Psoas muscle (tissue), 8 donors: ENCODE measurements at regions of chr17 and their contacts with region 1.

Region 1: DNA sequence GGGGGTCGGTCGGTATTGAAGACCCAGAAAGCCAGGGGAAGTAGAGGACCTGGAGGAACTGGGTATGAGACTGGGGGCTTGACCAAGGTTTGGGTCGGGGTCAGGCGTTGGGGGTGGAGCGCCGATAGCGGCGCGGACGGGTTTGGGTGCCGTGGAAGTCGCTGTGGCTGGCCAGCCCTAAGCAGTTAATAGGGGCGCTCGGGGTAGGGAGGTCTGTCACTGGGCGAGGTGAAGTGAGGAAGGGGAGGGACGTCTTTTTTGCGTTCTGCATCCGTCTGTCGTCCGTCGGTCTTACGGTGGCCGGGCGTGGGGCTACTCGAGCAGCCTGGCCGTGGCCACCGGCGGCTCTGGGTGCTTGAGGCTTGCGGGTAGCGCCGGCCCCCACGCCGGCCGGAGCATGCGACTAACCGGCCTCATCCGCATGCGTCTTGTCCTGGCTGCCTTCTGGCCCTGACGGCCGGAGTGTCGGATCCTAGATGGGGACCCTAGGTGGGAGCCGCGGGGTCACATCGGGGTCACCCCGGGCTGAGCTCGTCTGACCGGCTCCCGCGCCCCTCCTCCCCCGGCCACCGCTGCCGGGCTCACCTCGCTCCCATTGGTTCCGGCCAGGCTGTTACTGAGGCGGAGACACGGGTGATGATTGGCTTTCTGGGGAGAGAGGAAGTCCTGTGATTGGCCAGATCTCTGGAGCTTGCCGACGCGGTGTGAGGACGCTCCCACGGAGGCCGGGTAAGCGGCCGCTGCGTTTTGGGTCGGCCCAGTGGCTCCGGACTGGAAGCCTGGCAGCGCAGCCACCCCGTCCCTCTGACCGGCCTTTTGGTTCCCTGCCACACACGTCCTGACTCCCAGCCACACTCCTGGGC is 10.3 kb upstream of the TMEM88 start:
- DNase-seq: peak; percentile 90 to 94
- ATAC-seq: peak; percentile 64 to 70 (median 66)
- H3K4me3 ChIP-seq: peak overlapping the region; percentile 81
- H3K27ac ChIP-seq: peak overlapping the region; percentile 99
- H3K4me1 ChIP-seq: peaks cover 33% of the 10 kb centered on the region
- H3K27me3 ChIP-seq: no peaks in the 10 kb centered on the region
- CTCF ChIP-seq: no peak

Region 2: DNA sequence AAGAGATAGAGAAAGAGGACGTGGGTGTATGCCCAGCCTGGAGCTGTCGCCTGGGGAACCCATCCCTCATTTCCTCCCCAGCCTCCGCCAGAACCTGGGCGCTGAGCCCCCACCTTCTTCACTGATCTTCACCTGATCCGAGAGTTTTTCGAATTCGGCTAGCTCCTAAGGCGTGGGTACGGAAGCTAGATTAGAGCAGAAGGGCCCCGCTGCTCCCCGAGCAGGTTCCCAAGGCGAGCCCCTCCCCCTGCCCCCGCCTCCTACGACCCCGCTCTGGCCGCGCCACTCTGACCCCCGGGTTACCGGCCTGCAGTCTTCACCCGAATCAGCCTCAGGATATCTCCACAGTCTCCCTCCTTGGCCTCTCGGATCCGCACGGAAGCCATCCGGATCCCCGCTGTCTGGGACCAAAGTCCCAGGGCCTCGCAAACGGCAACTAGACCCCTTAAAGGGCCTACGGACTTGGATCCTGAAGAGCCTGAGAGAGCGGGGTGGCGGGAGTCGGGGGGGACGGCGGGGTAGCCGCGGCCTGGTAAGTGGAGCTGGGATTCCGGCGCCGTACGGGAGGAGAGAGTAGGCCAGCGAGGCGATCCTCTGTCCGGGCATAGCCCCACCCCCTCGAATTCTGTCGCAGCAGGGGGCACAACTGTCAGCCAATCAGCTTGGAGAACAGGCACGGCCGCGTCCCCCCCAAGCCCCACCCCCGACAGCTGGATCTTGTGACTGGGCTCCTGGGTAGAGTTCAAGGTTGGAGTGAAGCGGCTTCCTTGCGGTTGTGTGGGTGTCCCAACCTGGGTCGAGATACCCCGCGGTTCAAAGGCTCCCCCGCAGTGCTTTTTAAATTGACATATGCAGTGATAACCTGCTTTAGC is 217.0 kb before region 1 on chr17 and contains the start of gene SAT2:
- intact Hi-C with region 1: loop called in 1 of 2 experiments (anchors 10 kb)
- DNase-seq: peak; percentile 97 to 98
- ATAC-seq: peak; percentile 98 to 99 (median 99)
- H3K4me3 ChIP-seq: peak within 1 kb of the TSS; percentile 92
- H3K27ac ChIP-seq: peak within 1 kb of the TSS; percentile 97
- H3K4me1 ChIP-seq: peaks cover 13% of the 10 kb centered on the region
- H3K27me3 ChIP-seq: no peaks in the 10 kb centered on the region
- CTCF ChIP-seq: no peak
- total RNA-seq, gene SAT2: 60.7 to 70.4 (median 66.2) TPM

Region 3: DNA sequence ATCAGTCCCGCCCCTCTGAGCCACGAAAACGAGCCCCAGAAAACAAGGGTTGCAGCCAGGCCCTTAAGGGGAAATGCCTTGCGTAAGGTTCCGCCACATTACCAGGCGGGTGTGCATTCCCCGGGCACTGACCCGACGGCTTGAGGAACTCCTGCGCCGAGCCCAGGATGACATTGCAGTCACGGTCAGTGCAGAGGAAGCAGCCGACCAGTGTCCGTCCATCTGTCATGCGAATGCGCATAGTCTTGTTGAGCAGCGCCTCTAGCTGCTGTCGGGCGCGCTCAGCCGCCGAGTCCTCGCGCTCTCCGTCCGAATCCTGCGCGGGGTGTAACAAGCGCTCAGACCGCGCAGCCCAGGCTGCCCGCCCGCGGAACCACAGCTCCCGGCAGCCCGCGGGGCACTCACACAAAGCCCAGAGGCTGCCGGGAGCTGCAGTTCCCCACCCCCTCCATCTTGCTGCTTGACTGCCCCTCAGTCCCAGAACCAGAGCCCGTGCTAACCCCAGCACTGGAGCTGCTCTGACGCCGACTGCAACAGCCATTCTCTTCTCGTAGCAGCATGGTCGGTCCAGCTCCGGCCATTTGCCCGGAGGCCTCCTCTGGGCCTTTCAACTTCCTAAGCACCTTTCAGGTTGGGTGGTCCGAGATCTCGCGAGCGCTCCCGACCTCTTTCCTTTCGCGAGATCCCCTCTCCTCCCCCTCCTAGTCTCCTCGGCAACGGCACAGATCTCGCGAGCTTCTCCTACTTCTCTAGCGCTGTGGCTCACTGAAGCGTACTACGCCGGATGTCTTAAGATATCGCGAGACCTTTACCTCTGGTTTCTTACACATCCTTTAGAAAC is 12.6 kb after region 1 on chr17 and contains the start of gene NAA38:
- intact Hi-C with region 1: loop called in 1 of 2 experiments (anchors 1 kb)
- DNase-seq: peak; percentile 96 to 98
- ATAC-seq: peak; percentile 88 to 92 (median 90)
- H3K4me3 ChIP-seq: peak within 1 kb of the TSS; percentile 86
- H3K27ac ChIP-seq: peak within 1 kb of the TSS; percentile 93
- H3K4me1 ChIP-seq: peaks cover 27% of the 10 kb centered on the region
- H3K27me3 ChIP-seq: no peaks in the 10 kb centered on the region
- CTCF ChIP-seq: peak; percentile 43
- total RNA-seq, gene NAA38: 60.8 to 95.4 (median 73.3) TPM

Region 4: DNA sequence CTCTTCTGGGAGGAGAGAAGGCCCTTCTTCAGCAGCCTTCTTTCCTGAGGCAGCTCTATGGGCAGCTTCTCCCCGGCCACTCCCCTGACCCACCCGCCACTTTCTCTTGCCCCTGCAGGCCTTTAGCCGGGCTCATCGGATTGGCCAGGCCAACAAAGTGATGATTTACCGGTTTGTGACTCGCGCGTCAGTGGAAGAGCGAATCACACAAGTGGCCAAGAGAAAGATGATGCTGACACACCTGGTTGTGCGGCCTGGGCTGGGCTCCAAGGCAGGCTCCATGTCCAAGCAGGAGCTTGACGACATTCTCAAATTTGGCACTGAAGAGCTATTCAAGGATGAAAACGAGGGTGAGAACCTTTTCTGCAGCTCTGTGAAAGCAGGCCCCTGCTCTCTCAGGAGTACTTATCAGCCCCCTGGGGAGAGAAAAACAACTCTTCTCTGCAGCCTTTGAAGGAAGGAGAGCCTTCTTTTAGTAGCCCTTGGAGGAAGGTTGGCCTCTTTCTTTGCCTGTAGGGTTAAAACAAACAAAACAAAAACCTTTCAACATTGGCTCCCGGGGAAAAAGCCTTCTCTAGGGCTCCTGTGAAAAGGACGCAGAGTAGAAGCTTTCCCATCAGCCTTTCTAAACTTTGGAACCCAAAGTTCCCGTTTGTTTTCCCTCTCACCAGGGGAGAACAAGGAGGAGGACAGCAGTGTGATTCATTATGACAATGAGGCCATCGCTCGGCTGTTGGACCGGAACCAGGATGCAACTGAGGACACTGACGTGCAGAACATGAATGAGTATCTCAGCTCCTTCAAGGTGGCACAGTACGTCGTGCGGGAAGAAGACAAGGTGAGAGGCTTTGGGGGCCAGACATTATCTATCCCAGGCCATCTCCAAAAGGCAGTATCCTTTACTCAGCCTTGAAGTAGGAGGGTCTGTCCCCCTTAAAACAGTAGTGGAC is 58.9 kb after region 1 on chr17:
- intact Hi-C with region 1: no loop called
- DNase-seq: no peak
- ATAC-seq: no peak
- H3K4me3 ChIP-seq: no peak overlapping the region
- H3K27ac ChIP-seq: no peak overlapping the region
- H3K4me1 ChIP-seq: no peaks in the 10 kb centered on the region
- H3K27me3 ChIP-seq: no peaks in the 10 kb centered on the region
- CTCF ChIP-seq: no peak